ENCODE measurements at regions of chr2 and their contacts with region 1.

Region 1: DNA sequence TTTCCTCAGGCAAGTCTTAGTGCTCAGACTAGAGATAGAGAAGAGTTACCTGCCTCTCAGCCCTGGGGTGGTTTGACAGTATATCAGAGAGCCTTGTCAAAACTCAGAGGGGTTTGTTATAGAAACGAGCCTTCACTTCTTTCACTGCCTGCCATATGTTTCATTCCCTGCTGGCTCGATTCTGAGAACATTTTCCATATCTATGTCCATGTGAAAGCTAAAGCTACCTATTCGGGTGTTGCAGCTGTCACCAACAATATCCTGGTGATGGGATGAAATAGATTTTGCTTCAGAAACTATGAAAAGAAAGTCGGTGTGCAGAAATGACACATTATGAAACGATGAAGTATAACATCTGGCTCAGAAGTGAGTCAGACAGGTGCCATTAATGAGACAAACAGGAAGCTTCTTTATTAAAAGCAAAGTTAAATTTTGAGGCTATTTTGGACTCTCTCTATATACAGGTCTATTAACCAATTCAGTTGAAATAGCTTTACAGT is 56.1 kb upstream of the TANK start:
- DNase-seq: peak; percentile 46
- H3K4me3 ChIP-seq: peak overlapping the region; percentile 32
- H3K27ac ChIP-seq: peak overlapping the region; percentile 80
- H3K4me1 ChIP-seq: peaks cover 54% of the 10 kb centered on the region
- CTCF ChIP-seq: no peak

Region 2: DNA sequence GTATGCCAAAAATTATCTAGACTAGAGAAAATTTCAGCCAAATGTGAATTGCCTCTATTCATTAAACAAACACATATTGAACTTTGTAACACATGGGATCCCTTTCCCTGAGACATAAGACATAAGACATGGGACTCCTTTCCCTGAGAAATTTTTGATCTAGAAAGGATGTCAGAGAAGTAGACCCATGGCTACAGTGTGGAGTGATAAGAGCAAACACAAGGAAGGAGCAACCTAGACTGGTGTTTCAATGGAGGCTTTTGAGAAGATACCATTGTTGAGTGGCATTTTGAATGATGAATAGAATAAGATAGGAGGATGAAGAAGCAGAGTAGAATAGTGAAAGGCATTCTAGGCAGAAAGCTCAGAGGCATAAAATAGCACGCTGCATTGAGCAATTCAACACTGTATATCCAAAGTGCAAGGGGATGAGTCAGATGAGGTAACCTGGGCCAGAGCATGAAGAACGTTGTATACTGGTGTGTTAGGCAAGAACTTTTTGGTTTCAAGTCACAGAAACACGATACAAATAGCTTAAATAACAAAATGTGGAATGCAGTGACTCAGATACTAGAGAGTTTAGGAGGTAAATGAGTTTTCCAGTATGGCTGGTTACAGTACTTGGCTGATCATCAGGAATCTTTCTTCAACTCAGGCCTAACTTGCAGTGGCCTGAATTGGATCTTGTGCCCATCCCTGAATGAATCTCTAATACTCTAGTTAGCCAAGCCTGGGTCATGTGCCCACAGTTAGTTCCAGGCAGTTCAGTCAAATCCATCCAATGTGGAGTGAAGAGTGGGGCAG is 73.6 kb before region 1 on chr2:
- CTCF ChIA-PET with region 1: no interaction called
- POLR2A ChIA-PET with region 1: no interaction called
- intact Hi-C with region 1: no loop called
- DNase-seq: no peak
- H3K4me3 ChIP-seq: no peak overlapping the region
- H3K27ac ChIP-seq: no peak overlapping the region
- H3K4me1 ChIP-seq: no peaks in the 10 kb centered on the region
- CTCF ChIP-seq: no peak

Region 3: DNA sequence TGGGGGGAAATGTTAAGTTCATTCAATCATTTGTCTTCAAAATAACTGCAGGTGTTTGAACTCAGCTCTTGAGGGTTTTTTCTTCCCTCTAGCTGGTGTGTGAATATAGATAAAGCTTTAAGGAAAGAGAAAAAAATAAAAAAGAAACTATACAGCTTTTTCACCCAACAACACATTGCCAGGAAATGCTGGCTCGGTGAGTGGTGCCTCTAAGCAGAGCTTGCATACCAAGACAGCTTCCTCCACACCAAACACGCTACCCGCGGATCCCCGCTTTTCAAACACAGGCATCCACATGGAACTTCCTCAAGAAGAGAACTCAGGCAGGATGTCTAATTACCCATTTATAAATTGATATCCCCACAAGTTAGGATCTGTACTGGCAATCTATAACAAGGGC is 13.7 kb before region 1 on chr2:
- CTCF ChIA-PET with region 1: interaction called, 5 read pairs
- POLR2A ChIA-PET with region 1: interaction called, 19 read pairs
- intact Hi-C with region 1: no loop called
- DNase-seq: no peak
- H3K4me3 ChIP-seq: no peak overlapping the region
- H3K27ac ChIP-seq: no peak overlapping the region
- H3K4me1 ChIP-seq: peaks cover 26% of the 10 kb centered on the region
- CTCF ChIP-seq: no peak

Region 4: GRCh38 chr2:161116509-161116908 is 12.4 kb after region 1 on chr2:
- CTCF ChIA-PET with region 1: interaction called, 6 read pairs
- POLR2A ChIA-PET with region 1: interaction called, 111 read pairs
- intact Hi-C with region 1: no loop called
- DNase-seq: peak; percentile 40
- H3K4me3 ChIP-seq: no peak overlapping the region
- H3K27ac ChIP-seq: no peak overlapping the region
- H3K4me1 ChIP-seq: peaks cover 31% of the 10 kb centered on the region
- CTCF ChIP-seq: no peak

Region 5: GRCh38 chr2:161122772-161123530 is 18.8 kb after region 1 on chr2:
- CTCF ChIA-PET with region 1: interaction called, 6 read pairs
- POLR2A ChIA-PET with region 1: interaction called, 111 read pairs
- intact Hi-C with region 1: no loop called
- DNase-seq: no peak
- H3K4me3 ChIP-seq: no peak overlapping the region
- H3K27ac ChIP-seq: no peak overlapping the region
- H3K4me1 ChIP-seq: peaks cover 7% of the 10 kb centered on the region
- CTCF ChIP-seq: no peak

Region 6: GRCh38 chr2:161136696-161137324 is 32.7 kb after region 1 on chr2:
- CTCF ChIA-PET with region 1: interaction called, 3 read pairs
- POLR2A ChIA-PET with region 1: interaction called, 82 read pairs
- intact Hi-C with region 1: loop called (anchors 2 kb)
- DNase-seq: peak; percentile 77
- H3K4me3 ChIP-seq: peak overlapping the region; percentile 67
- H3K27ac ChIP-seq: peak overlapping the region; percentile 62
- H3K4me1 ChIP-seq: peaks cover 30% of the 10 kb centered on the region
- CTCF ChIP-seq: no peak

Region 7: GRCh38 chr2:161160226-161161069 is 56.3 kb after region 1 on chr2 and contains the start of gene TANK:
- CTCF ChIA-PET with region 1: no interaction called
- POLR2A ChIA-PET with region 1: interaction called, 5 read pairs
- intact Hi-C with region 1: loop called (anchors 2 kb)
- DNase-seq: peak; percentile 97
- H3K4me3 ChIP-seq: peak within 1 kb of the TSS; percentile 85
- H3K27ac ChIP-seq: peak within 1 kb of the TSS; percentile 91
- H3K4me1 ChIP-seq: peaks cover 29% of the 10 kb centered on the region
- CTCF ChIP-seq: 0 out of 2 replicates have a peak, but pooled peaks have one; percentile 12
- total RNA-seq, gene TANK: 43.4 and 52.6 TPM in 2 replicates

Region 8: DNA sequence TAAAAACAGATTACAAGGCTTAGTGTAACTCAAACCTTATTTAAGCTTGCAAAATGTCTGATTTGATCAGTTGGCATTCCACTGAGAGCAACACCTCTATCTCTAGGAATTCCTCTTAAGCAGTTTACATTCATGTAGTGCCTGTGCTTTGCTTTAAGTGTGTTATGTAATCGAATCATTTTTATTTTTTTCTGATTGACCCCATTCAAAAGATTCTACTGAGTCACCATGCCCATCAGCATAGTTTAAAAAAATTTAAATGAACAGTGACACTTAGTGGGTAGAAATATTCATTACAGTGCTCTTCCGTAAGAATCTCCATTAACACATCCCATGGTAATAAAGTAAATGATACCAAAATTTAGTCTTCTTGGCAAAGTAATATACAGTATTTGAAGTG is 452.3 kb after region 1 on chr2:
- CTCF ChIA-PET with region 1: no interaction called
- POLR2A ChIA-PET with region 1: no interaction called
- intact Hi-C with region 1: no loop called
- DNase-seq: no peak
- H3K4me3 ChIP-seq: no peak overlapping the region
- H3K27ac ChIP-seq: no peak overlapping the region
- H3K4me1 ChIP-seq: no peaks in the 10 kb centered on the region
- CTCF ChIP-seq: peak; percentile 49

Measured in OCI-LY7 (cell line).